ENCODE measurements at regions of chr7 and their contacts with region 1.

Region 1: GRCh38 chr7:107743567-107744344 is at the start of gene CBLL1:
- DNase-seq: peak; percentile 92 to 99 (median 97)

Region 2: GRCh38 chr7:107462740-107463444 is 280.9 kb before region 1 on chr7:
- intact Hi-C with region 1: loop called (anchors 10 kb)
- DNase-seq: peak; percentile 35 to 86 (median 66)

Region 3: GRCh38 chr7:107876916-107877315 is 133.2 kb after region 1 on chr7:
- intact Hi-C with region 1: loop called (anchors 2 kb)
- DNase-seq: no peak

Measured in head of caudate nucleus (tissue), 42 donors.